ENCODE measurements at regions of chr1 and their contacts with region 1.

Region 1: GRCh38 chr1:169601093-169601881 is 15.0 kb upstream of the F5 start:
- DNase-seq: peak; percentile 34
- H3K4me3 Mint-ChIP-seq: no peak overlapping the region
- H3K27ac Mint-ChIP-seq: peak overlapping the region; percentile 84
- H3K4me1 Mint-ChIP-seq: peaks cover 61% of the 10 kb centered on the region
- H3K27me3 Mint-ChIP-seq: no peaks in the 10 kb centered on the region

Region 2: GRCh38 chr1:169414952-169415351 is 186.3 kb before region 1 on chr1:
- CTCF ChIA-PET with region 1: no interaction called
- intact Hi-C with region 1: no loop called
- DNase-seq: no peak
- H3K4me3 Mint-ChIP-seq: no peak overlapping the region
- H3K27ac Mint-ChIP-seq: no peak overlapping the region
- H3K4me1 Mint-ChIP-seq: no peaks in the 10 kb centered on the region
- H3K27me3 Mint-ChIP-seq: peaks cover 6% of the 10 kb centered on the region

Region 3: GRCh38 chr1:169546087-169546995 is 54.9 kb before region 1 on chr1:
- CTCF ChIA-PET with region 1: interaction called, 12 read pairs
- intact Hi-C with region 1: loop called (anchors 2 kb)
- DNase-seq: peak; percentile 48
- H3K4me3 Mint-ChIP-seq: no peak overlapping the region
- H3K27ac Mint-ChIP-seq: no peak overlapping the region
- H3K4me1 Mint-ChIP-seq: no peaks in the 10 kb centered on the region
- H3K27me3 Mint-ChIP-seq: no peaks in the 10 kb centered on the region

Region 4: GRCh38 chr1:169624122-169624521 is 22.8 kb after region 1 on chr1:
- CTCF ChIA-PET with region 1: interaction called, 25 read pairs
- intact Hi-C with region 1: loop called (anchors 1 kb)
- DNase-seq: no peak
- H3K4me3 Mint-ChIP-seq: no peak overlapping the region
- H3K27ac Mint-ChIP-seq: peak overlapping the region; percentile 89
- H3K4me1 Mint-ChIP-seq: peaks cover 69% of the 10 kb centered on the region
- H3K27me3 Mint-ChIP-seq: no peaks in the 10 kb centered on the region

Region 5: DNA sequence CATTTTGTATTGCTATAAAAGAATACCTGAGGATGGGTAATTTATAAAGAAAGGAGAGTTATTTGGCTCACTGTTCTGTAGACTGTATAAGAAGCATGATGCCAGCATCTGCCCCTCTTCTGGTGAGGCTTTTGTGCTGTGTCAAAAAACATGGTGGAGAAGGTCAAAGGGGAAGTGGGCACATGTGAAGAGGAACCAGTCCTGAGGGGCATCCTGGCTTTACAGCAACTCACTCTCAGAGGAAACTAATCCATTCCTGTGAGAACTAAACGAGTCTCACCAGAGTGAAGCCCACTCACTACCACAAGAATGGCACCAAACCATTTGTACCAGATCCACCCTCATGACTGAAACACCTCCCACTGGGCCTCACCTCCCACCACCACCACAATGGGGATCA is 47.4 kb after region 1 on chr1:
- CTCF ChIA-PET with region 1: interaction called, 13 read pairs
- intact Hi-C with region 1: loop called (anchors 1 kb)
- DNase-seq: no peak
- H3K4me3 Mint-ChIP-seq: peak overlapping the region; percentile 58
- H3K27ac Mint-ChIP-seq: peak overlapping the region; percentile 95
- H3K4me1 Mint-ChIP-seq: peaks cover 40% of the 10 kb centered on the region
- H3K27me3 Mint-ChIP-seq: no peaks in the 10 kb centered on the region

Region 6: DNA sequence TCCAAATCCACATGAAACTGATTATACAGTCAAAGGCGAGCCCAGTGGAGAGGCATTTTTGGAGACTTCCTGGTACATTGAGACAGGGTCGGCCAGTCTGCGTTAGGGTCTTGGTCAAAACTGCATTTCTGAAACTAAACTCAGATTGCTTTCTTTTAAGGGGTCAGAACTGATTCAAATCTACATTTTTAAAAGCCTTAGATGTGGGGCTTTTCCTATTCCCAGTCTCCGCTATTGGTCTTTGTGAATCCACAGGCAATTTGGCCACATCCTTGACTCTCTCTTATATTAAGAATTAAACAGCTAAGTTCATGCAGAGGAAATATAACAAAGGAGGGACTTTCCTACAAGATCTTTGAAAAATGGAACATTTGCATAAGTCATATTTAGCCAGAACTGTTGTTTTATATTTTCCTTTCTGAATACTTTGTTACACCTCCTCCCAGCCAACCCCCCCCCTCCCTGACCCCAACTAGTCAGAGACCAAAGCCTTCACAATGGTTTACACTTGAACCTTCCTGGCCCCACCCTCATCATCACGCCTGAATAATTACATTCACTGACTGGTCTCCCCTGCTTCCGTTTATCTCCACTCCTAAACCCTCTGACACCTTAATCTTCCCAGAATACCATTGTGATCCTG is 79.2 kb after region 1 on chr1:
- CTCF ChIA-PET with region 1: interaction called, 94 read pairs
- intact Hi-C with region 1: no loop called
- DNase-seq: peak; percentile 83
- H3K4me3 Mint-ChIP-seq: peak overlapping the region; percentile 53
- H3K27ac Mint-ChIP-seq: peak overlapping the region; percentile 90
- H3K4me1 Mint-ChIP-seq: peaks cover 61% of the 10 kb centered on the region
- H3K27me3 Mint-ChIP-seq: no peaks in the 10 kb centered on the region

Region 7: GRCh38 chr1:169694304-169695075 is 93.2 kb after region 1 on chr1:
- CTCF ChIA-PET with region 1: interaction called, 133 read pairs
- intact Hi-C with region 1: loop called (anchors 1 kb)
- DNase-seq: peak; percentile 59
- H3K4me3 Mint-ChIP-seq: peak overlapping the region; percentile 32
- H3K27ac Mint-ChIP-seq: peak overlapping the region; percentile 94
- H3K4me1 Mint-ChIP-seq: peaks cover 96% of the 10 kb centered on the region
- H3K27me3 Mint-ChIP-seq: no peaks in the 10 kb centered on the region

Region 8: GRCh38 chr1:169809370-169810095 is 208.2 kb after region 1 on chr1:
- CTCF ChIA-PET with region 1: interaction called, 20 read pairs
- intact Hi-C with region 1: loop called (anchors 1 kb)
- DNase-seq: peak; percentile 10
- H3K4me3 Mint-ChIP-seq: no peak overlapping the region
- H3K27ac Mint-ChIP-seq: no peak overlapping the region
- H3K4me1 Mint-ChIP-seq: no peaks in the 10 kb centered on the region
- H3K27me3 Mint-ChIP-seq: no peaks in the 10 kb centered on the region